A673 (cell line): ENCODE measurements at regions of chr3 and their contacts with region 1.

Region 1: DNA sequence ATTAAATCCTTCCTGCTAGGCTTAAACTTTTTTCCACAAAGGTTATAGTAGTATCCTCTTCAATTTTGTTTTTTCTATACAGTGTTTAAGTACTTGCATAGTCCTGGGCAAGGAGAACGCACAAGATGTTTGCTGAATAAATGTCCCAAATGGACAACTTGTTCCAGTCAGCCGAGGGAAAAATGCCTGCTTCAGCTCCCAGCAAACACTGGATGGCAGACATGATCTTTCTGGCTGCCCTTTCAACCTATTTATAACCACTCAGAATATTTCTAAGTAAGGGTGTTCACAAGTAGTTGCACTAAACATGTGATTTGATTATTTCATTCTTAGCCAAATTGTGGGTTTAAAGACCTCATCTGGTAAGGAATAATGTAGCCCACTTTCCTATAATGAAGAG is 29.8 kb downstream of the GNB4 start:
- DNase-seq: peak; percentile 35
- H3K4me3 ChIP-seq: no peak overlapping the region
- H3K27ac ChIP-seq: no peak overlapping the region
- H3K4me1 ChIP-seq: no peaks in the 10 kb centered on the region
- H3K27me3 ChIP-seq: no peaks in the 10 kb centered on the region
- CTCF ChIP-seq: peak; percentile 47

Region 2: GRCh38 chr3:179260949-179261765 is 160.3 kb before region 1 on chr3:
- CTCF ChIA-PET with region 1: interaction called, 10 read pairs
- POLR2A ChIA-PET with region 1: no interaction called
- intact Hi-C with region 1: no loop called
- DNase-seq: peak; percentile 82
- H3K4me3 ChIP-seq: peak overlapping the region; percentile 63
- H3K27ac ChIP-seq: peak overlapping the region; percentile 70
- H3K4me1 ChIP-seq: no peaks in the 10 kb centered on the region
- H3K27me3 ChIP-seq: no peaks in the 10 kb centered on the region
- CTCF ChIP-seq: no peak